Left cardiac atrium (tissue), 4 donors: ENCODE measurements at regions of chr17 and their contacts with region 1.

Region 1: DNA sequence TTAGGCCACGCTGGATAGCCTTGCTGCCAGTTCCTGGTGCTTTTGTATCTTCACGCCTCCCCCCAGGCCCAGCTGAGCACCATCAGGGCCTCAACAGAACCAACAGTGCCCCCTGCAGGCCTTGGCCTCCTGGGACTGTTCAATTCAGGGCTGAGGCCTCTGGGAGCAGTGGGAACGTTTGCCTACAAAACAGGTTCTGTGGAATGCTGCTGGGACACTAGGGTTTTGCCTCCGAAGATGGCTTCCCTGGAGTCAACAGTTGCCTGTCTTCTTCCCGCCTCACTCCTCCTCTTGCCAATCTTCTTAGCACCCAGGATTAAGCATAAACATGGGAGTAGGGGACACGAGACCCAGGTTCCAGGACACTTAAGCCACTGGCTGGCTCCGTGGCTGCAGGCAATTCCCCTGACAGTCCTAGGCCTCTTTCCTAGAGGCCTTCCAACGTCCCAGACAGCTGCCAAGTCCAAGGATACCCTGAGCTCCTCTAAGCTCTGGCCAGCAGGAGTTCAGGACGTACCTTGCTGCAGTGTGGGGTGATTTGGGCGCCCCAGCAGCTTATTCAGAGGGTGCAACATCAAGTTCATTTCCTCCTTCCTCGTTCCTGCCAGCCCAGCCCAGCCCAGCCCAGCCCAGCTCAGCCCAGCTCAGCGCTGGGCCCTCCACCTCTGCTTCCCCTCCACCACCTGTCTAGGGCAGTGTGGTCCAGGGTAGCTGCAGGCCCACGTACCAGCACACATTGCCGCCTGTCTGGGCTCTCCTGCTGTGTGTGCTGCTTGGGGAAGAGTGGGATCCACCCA is 246.6 kb upstream of the RPL38 start:
- DNase-seq: peak; percentile 59
- ATAC-seq: peak in 1 of 2 donors; percentile 51

Region 2: GRCh38 chr17:73645050-73645978 is 311.6 kb before region 1 on chr17:
- intact Hi-C with region 1: loop called in 1 of 2 experiments (anchors 5 kb)
- DNase-seq: peak; percentile 57
- ATAC-seq: peak; percentile 79 to 85